Astrocyte of the cerebellum (primary cell): ENCODE measurements at regions of chr12 and their contacts with region 1.

Region 1: DNA sequence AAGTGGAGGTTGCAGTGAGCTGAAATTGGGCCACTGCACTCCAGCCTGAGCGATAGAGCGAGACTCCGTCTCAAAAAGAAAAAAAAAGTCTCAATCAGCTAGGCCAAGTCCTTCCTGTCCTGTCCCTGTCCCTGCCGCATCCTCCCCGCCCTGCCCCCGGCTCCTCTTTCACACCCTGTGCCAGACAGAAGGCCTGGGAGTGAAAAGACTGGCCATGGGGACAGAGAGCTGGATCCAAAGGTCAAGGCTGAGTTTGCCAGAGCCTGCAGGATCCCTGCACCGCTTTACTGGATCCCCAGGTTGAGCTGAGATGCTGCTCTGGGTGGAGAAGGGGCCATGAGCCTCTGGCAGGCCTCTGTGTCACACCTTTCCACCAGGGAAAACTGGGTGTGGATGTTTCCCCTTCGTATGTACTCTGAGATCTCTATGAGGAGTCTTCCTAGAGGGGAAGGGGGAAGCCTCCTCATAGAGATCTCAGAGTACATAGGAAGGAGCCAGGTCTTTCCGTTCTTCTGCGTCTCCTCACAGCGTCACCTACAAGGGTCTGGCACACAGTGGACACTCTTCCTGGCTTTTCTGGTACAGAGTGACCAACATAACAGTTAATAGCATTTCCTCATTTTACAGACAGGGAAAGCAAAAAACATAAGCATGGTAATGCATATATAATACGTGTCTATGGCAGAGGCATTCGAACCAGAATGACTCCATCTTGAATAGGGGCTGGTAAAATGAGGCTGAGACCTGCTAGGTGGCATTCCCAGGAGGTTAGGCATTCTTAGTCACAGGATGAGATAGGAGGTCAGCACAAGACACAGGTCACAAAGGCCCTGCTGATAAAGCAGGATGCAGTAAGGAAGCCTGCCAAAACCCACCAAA is 35.1 kb downstream of the NINJ2 start:
- DNase-seq: no peak
- H3K4me3 ChIP-seq: no peak overlapping the region
- CTCF ChIP-seq: no peak

Region 2: DNA sequence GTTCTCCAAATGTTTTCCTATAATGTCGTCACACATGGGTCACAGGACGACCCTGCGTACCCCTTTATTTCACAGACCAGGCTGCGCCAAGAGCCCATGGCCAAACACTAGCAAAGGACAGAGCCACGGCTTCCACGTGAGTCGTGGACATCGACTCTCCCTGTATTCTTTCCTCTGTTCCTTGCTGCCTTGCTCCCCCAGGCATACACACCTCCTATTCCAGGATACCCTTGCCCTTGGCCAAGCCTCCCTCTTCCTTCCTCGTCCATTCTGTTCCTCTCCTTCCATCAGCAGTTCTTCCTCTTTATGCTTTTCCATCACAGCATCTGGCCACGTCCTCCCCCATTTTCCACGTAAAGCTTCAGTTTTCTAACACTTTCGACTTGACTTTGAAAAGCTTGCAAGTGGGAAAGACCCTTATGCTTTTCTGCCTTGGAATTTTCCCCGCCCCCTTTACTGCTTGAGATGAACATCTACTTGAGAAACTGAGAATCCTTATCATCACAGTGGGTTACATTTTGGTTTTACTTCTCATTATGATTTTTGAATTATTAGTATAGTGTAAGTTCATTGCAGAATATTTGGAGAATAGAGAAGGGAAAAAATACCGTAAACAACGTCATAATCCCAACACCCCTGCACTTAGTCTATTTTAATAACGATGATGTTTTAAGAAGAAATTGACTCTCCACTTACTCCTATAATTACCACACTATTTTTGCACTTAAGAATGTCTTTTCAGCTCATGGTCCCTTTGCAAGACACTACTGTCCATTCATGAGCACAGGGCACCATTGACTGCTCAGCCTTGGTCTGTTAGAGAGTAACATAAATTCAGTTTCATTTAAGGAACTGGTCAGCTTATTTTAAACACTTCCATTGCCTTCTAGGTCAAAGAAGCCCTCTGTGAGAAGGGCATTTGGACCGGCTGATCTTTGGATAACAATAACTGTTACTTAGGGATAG is 50.9 kb after region 1 on chr12:
- in situ Hi-C with region 1: loop called (anchors 5 kb)
- DNase-seq: no peak
- H3K4me3 ChIP-seq: no peak overlapping the region
- CTCF ChIP-seq: no peak